ENCODE measurements at regions of chr4 and their contacts with region 1.

Region 1: GRCh38 chr4:13888112-13888511 is 260.6 kb upstream of the BOD1L1 start:
- DNase-seq: peak; percentile 26 to 82
- H3K4me3 ChIP-seq: no peak overlapping the region
- H3K27ac ChIP-seq: peak overlapping the region; percentile 78
- H3K4me1 ChIP-seq: peaks cover 37% of the 10 kb centered on the region
- H3K27me3 ChIP-seq: no peaks in the 10 kb centered on the region
- CTCF ChIP-seq: no peak

Region 2: GRCh38 chr4:13627606-13628301 is 260.4 kb before region 1 on chr4 and contains the start of gene BOD1L1:
- CTCF ChIA-PET with region 1: no interaction called
- POLR2A ChIA-PET with region 1: no interaction called
- intact Hi-C with region 1: loop called (anchors 1 kb)
- DNase-seq: peak; percentile 70 to 84
- H3K4me3 ChIP-seq: peak within 1 kb of the TSS; percentile 68
- H3K27ac ChIP-seq: peak within 1 kb of the TSS; percentile 85
- H3K4me1 ChIP-seq: peaks cover 15% of the 10 kb centered on the region
- H3K27me3 ChIP-seq: no peaks in the 10 kb centered on the region
- CTCF ChIP-seq: no peak
- total RNA-seq, gene BOD1L1: 33.6 and 40.4 TPM in 2 replicates

Region 3: GRCh38 chr4:13701937-13702446 is 186.1 kb before region 1 on chr4:
- CTCF ChIA-PET with region 1: no interaction called
- POLR2A ChIA-PET with region 1: no interaction called
- intact Hi-C with region 1: loop called (anchors 1 kb)
- DNase-seq: peak; percentile 65 to 94
- H3K4me3 ChIP-seq: no peak overlapping the region
- H3K27ac ChIP-seq: peak overlapping the region; percentile 97
- H3K4me1 ChIP-seq: peaks cover 63% of the 10 kb centered on the region
- H3K27me3 ChIP-seq: no peaks in the 10 kb centered on the region
- CTCF ChIP-seq: no peak

Region 4: DNA sequence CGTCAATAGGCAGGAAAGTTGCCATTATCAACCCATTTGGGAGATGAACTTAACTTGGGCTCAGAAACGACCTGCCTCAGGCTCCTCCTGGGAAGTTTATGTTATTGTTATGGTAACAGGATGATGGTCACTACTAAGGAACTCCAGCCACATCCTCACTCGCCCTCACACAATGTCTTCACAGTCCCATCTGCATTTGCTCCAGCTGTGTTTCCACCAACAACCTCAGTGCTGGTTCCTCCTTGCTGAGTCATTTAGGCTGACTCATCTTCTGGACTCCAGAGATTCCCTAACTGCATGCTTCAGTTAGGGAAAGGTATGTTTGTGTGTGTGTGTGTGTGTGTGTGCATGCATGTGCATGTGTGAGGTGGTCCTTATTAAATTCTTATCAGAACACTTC is 32.8 kb after region 1 on chr4:
- CTCF ChIA-PET with region 1: no interaction called
- POLR2A ChIA-PET with region 1: no interaction called
- intact Hi-C with region 1: loop called (anchors 1 kb)
- DNase-seq: peak; percentile 78 to 97
- H3K4me3 ChIP-seq: no peak overlapping the region
- H3K27ac ChIP-seq: peak overlapping the region; percentile 99
- H3K4me1 ChIP-seq: peaks cover 37% of the 10 kb centered on the region
- H3K27me3 ChIP-seq: no peaks in the 10 kb centered on the region
- CTCF ChIP-seq: no peak